Mammary epithelial cell (primary cell): ENCODE measurements at regions of chr2 and their contacts with region 1.

Region 1: DNA sequence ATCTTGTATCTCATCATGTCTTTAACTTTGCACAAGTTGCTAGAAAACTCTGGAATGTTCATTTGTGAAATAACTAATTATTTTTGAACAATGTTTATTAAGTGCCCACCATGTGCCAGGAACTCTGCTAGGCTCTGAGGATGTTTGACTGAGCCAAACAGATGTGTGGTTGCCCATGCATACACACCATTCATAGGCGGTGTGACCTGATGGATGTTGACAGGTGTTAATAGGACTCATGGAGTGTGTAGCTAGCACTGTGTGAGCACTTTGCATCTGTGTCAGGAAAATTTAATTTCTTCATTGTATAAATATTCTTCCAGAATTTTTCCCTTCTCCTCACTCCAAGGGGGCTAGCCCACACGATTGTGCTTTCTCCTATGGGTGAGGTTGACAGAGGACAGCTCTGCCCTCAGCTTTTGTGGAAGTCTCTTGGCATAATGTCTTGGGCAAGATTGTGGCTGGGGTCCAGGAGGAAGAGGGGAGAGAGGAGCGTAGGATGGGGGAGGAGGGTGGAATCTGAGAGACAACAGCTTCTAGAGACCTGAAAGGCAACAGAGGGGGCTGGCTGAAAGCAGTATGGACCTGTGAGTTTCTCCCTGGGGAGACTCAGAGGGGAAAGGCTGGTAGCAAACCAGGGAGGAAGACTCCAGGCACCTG is 214.6 kb upstream of the CXCR4 start:
- DNase-seq: no peak
- H3K4me3 ChIP-seq: no peak overlapping the region
- H3K27ac ChIP-seq: no peak overlapping the region
- H3K4me1 ChIP-seq: no peaks in the 10 kb centered on the region
- H3K27me3 ChIP-seq: peaks cover 1% of the 10 kb centered on the region
- CTCF ChIP-seq: no peak

Region 2: GRCh38 chr2:136294059-136294458 is 38.5 kb before region 1 on chr2:
- CTCF ChIA-PET with region 1: no interaction called
- dilution Hi-C with region 1: no loop called
- in situ Hi-C with region 1: no loop called
- intact Hi-C with region 1: loop called (anchors 5 kb)
- DNase-seq: no peak
- H3K4me3 ChIP-seq: no peak overlapping the region
- H3K27ac ChIP-seq: no peak overlapping the region
- H3K4me1 ChIP-seq: no peaks in the 10 kb centered on the region
- H3K27me3 ChIP-seq: peaks cover 2% of the 10 kb centered on the region
- CTCF ChIP-seq: no peak

Region 3: GRCh38 chr2:136394136-136395060 is 61.8 kb after region 1 on chr2:
- CTCF ChIA-PET with region 1: no interaction called
- dilution Hi-C with region 1: no loop called
- in situ Hi-C with region 1: no loop called
- intact Hi-C with region 1: no loop called
- DNase-seq: no peak
- H3K4me3 ChIP-seq: no peak overlapping the region
- H3K27ac ChIP-seq: no peak overlapping the region
- H3K4me1 ChIP-seq: no peaks in the 10 kb centered on the region
- H3K27me3 ChIP-seq: no peaks in the 10 kb centered on the region
- CTCF ChIP-seq: no peak